ENCODE measurements at regions of chrX and their contacts with region 1.

Region 1: GRCh38 chrX:38006291-38006690 is at the start of gene SYTL5:
- DNase-seq: peak; percentile 10
- H3K4me3 Mint-ChIP-seq: peak within 1 kb of the TSS; percentile 30
- H3K27ac Mint-ChIP-seq: peak within 1 kb of the TSS; percentile 66
- H3K4me1 Mint-ChIP-seq: peaks cover 38% of the 10 kb centered on the region
- H3K27me3 Mint-ChIP-seq: no peaks in the 10 kb centered on the region
- CTCF ChIP-seq: no peak
- total RNA-seq, gene SYTL5: 0.47 and 1.2 TPM in 2 replicates

Region 2: GRCh38 chrX:37509349-37509748 is 496.9 kb before region 1 on chrX:
- CTCF ChIA-PET with region 1: no interaction called
- intact Hi-C with region 1: loop called (anchors 5 kb)
- DNase-seq: peak; percentile 18
- H3K4me3 Mint-ChIP-seq: no peak overlapping the region
- H3K27ac Mint-ChIP-seq: no peak overlapping the region
- H3K4me1 Mint-ChIP-seq: no peaks in the 10 kb centered on the region
- H3K27me3 Mint-ChIP-seq: no peaks in the 10 kb centered on the region
- CTCF ChIP-seq: no peak

Region 3: GRCh38 chrX:37871626-37872302 is 134.5 kb before region 1 on chrX:
- CTCF ChIA-PET with region 1: no interaction called
- intact Hi-C with region 1: no loop called
- DNase-seq: peak; percentile 38
- H3K4me3 Mint-ChIP-seq: no peak overlapping the region
- H3K27ac Mint-ChIP-seq: no peak overlapping the region
- H3K4me1 Mint-ChIP-seq: peaks cover 26% of the 10 kb centered on the region
- H3K27me3 Mint-ChIP-seq: no peaks in the 10 kb centered on the region
- CTCF ChIP-seq: no peak

Region 4: GRCh38 chrX:38095971-38096529 is 89.8 kb after region 1 on chrX:
- CTCF ChIA-PET with region 1: no interaction called
- intact Hi-C with region 1: loop called (anchors 5 kb)
- DNase-seq: no peak
- H3K4me3 Mint-ChIP-seq: peak overlapping the region; percentile 53
- H3K27ac Mint-ChIP-seq: peak overlapping the region; percentile 79
- H3K4me1 Mint-ChIP-seq: peaks cover 8% of the 10 kb centered on the region
- H3K27me3 Mint-ChIP-seq: no peaks in the 10 kb centered on the region
- CTCF ChIP-seq: no peak